ENCODE measurements at regions of chr21 and their contacts with region 1.

Region 1: GRCh38 chr21:42513985-42514882 is 582 bp downstream of the SLC37A1 start:
- DNase-seq: peak; percentile 55
- H3K4me3 Mint-ChIP-seq: peak overlapping the region; percentile 87
- H3K27ac Mint-ChIP-seq: peak overlapping the region; percentile 68
- H3K4me1 Mint-ChIP-seq: peaks cover 17% of the 10 kb centered on the region
- H3K27me3 Mint-ChIP-seq: peaks cover 9% of the 10 kb centered on the region

Region 2: GRCh38 chr21:42309753-42310221 is 204.4 kb before region 1 on chr21:
- intact Hi-C with region 1: loop called (anchors 10 kb)
- DNase-seq: peak; percentile 61
- H3K4me3 Mint-ChIP-seq: no peak overlapping the region
- H3K27ac Mint-ChIP-seq: no peak overlapping the region
- H3K4me1 Mint-ChIP-seq: peaks cover 6% of the 10 kb centered on the region
- H3K27me3 Mint-ChIP-seq: peaks cover 18% of the 10 kb centered on the region

Region 3: DNA sequence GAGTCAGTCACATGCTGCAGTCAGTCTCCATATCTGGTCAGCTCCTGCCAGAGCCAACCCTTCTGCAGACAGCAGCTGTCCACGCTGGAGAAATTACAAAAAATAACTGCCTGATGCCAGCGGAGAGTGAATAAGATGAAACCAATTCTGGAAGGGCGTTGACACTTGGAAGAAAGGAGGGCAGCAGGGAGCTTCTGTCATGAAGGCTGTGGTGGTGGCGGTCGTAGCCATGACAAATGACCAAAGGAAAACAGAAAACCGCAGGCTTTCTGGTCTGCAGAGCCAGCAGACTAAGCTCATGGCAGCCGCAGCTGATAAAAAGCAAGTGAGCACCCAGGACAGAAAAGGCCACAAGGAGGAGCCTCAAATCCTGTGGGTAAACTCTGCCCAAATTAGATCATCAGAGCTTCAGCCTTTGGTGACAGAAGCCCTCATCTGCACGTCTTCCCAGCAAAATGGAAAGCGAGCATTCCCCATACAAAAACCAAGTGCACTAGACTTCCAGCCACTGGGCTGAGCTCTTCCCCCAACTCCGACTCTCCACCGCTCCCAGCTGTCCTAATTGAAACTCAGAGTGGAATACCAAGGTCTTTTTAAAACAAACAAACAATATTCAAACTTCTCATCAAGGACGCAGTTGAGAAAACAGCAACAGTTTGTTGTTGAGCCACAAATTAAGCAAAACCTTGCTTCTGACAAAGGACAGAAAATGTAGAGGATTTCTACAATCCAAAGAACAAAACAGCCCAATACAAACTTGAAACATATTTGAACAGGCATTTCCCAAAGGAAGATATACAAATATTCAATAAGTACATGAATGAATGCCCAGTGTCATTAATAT is 46.9 kb before region 1 on chr21:
- intact Hi-C with region 1: loop called (anchors 5 kb)
- DNase-seq: no peak
- H3K4me3 Mint-ChIP-seq: no peak overlapping the region
- H3K27ac Mint-ChIP-seq: no peak overlapping the region
- H3K4me1 Mint-ChIP-seq: peaks cover 48% of the 10 kb centered on the region
- H3K27me3 Mint-ChIP-seq: peaks cover 8% of the 10 kb centered on the region

Region 4: DNA sequence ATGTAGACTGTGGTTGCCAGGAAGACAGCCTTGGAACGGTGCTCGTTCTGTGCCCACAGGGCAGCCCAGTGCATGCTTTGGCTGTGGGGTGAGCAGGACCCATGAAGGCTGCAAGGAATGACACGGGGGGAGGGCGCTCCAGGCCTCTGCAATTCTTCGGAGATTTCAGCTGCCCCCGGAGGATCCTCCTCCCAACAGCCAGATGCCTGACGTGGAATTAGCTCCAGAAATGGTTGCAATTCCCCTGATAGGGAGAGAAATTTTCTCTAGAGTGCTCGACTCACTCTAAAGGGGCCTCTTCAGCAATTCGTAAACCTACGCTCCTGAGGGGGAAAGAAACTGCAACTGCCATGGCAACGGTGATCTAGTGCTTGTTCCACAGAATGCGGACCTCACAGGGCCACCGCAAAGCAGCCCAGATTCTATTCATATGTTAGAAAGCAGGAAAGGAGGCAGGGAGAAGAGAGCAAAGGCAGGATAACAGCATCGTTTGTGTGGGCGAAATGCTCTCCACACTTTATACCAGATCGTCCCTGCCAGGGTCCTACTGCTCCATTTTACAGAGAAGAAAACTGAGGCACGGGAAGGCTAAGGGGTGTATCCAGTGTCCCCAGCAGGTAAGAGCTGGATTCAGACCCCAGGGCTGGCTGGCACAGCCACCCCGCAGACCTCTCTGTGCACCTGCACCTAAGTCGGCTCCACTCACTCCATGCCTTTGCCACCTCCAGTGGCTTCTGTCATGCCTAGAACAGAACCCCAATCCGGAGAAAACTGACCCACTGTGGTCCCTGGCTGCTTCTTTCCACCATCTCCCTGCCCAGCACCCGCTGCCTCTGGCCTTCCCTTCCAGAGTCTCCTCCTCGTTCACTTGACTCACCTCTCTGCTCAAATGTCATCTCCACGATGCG is 127.3 kb after region 1 on chr21:
- intact Hi-C with region 1: no loop called
- DNase-seq: no peak
- H3K4me3 Mint-ChIP-seq: no peak overlapping the region
- H3K27ac Mint-ChIP-seq: no peak overlapping the region
- H3K4me1 Mint-ChIP-seq: no peaks in the 10 kb centered on the region
- H3K27me3 Mint-ChIP-seq: peaks cover 24% of the 10 kb centered on the region

Measured in activated T-helper 1 cell treated with anti-CD3 and anti-CD28 coated beads, Interleukin-12 subunit alpha, Interleukin-12 subunit beta, Interleukin-2, Interleukin-4 antibody, amounts not matched to agents 30 ng/mL and 10 ng/mL and 1 ng/mL, durations not matched to agents 14 hours and 24 hours and 36 hours (primary cell).